ENCODE measurements at regions of chr9 and their contacts with region 1.

Region 1: GRCh38 chr9:70400107-70400892 is 14.2 kb downstream of the KLF9 start:
- DNase-seq: no peak
- H3K4me3 ChIP-seq: peak overlapping the region in 1 of 4 donors; percentile 4
- H3K27ac ChIP-seq: peak overlapping the region in 2 of 4 donors; percentile 16 to 43
- H3K4me1 ChIP-seq: peaks cover 95 to 100% (median 98%) of the 10 kb centered on the region in 4 donors
- H3K27me3 ChIP-seq: no peaks in the 10 kb centered on the region
- CTCF ChIP-seq: no peak
- EP300 ChIP-seq: no peak
- POLR2A ChIP-seq: no peak

Region 2: DNA sequence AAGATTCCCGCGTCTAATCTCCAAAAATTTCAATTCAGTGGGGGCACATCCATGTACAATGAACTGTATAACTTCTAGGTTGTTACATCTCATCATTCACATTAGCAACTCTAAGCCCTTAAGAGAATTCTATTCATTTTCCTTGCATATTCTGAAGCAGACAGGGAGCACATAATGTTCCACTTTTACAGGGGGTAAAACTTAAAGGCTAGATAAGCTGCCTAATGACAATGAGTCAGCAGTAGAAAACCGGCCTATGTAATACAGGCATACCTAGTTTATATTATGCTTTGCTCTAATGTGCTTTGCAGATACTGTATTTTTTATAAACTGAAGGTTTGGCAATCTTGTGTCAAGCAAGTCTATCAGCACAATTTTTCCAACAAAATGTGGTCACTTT is 680.9 kb before region 1 on chr9:
- intact Hi-C with region 1: no loop called
- DNase-seq: no peak
- H3K4me3 ChIP-seq: no peak overlapping the region
- H3K27ac ChIP-seq: no peak overlapping the region
- H3K4me1 ChIP-seq: no peaks in the 10 kb centered on the region
- H3K27me3 ChIP-seq: no peaks in the 10 kb centered on the region
- CTCF ChIP-seq: no peak
- EP300 ChIP-seq: no peak
- POLR2A ChIP-seq: no peak

Region 3: GRCh38 chr9:70382709-70383605 is 17.3 kb before region 1 on chr9:
- intact Hi-C with region 1: loop called (anchors 2 kb)
- DNase-seq: no peak
- H3K4me3 ChIP-seq: no peak overlapping the region
- H3K27ac ChIP-seq: peak overlapping the region in 1 of 4 donors; percentile 23
- H3K4me1 ChIP-seq: peaks cover 30 to 63% (median 52%) of the 10 kb centered on the region in 4 donors
- H3K27me3 ChIP-seq: no peaks in the 10 kb centered on the region
- CTCF ChIP-seq: no peak
- EP300 ChIP-seq: no peak
- POLR2A ChIP-seq: no peak